Caco-2 (cell line): ENCODE measurements at regions of chr1 and their contacts with region 1.

Region 1: GRCh38 chr1:11907275-11908094 is 18.7 kb downstream of the KIAA2013 start:
- DNase-seq: peak; percentile 91 to 95
- H3K4me3 ChIP-seq: no peak overlapping the region
- H3K4me3 Mint-ChIP-seq: peak overlapping the region; percentile 99
- H3K27ac Mint-ChIP-seq: peak overlapping the region; percentile 99
- H3K4me1 ChIP-seq: 0 out of 2 replicates have a peak, but pooled peaks cover 7% of the 10 kb centered on the region
- H3K4me1 Mint-ChIP-seq: peaks cover 14% of the 10 kb centered on the region
- H3K27me3 ChIP-seq: no peaks in the 10 kb centered on the region
- H3K27me3 Mint-ChIP-seq: peaks cover 5% of the 10 kb centered on the region
- CTCF ChIP-seq: peak in 1 of 2 experiments; percentile 72

Region 2: GRCh38 chr1:11838349-11839272 is 68.9 kb before region 1 on chr1:
- CTCF ChIA-PET with region 1: interaction called, 11 read pairs
- POLR2A ChIA-PET with region 1: interaction called, 9 read pairs
- intact Hi-C with region 1: loop called (anchors 5 kb)
- DNase-seq: peak; percentile 68 to 81
- H3K4me3 ChIP-seq: no peak overlapping the region
- H3K4me3 Mint-ChIP-seq: no peak overlapping the region
- H3K27ac Mint-ChIP-seq: no peak overlapping the region
- H3K4me1 ChIP-seq: no peaks in the 10 kb centered on the region
- H3K4me1 Mint-ChIP-seq: no peaks in the 10 kb centered on the region
- H3K27me3 ChIP-seq: no peaks in the 10 kb centered on the region
- H3K27me3 Mint-ChIP-seq: no peaks in the 10 kb centered on the region
- CTCF ChIP-seq: peak; percentile 92 to 98

Region 3: DNA sequence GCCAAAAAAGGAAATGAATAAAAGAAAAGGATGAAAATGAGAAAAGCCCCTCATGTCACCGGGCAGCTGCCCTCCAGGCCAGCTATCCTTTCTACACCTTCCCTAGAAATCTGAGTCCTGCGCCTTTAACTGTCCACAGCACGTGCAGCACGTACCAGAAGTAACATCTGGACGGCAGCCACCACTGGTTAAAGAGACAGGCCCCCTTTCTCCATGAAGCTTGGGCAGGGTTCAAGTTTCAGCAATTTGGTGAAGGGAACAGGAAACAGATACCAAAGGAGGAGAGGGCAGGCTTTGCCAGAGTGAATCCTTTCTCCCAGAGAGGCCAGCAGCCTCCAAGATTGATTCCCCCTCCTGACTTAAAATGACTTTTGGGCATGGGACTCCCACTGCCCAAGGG is 22.4 kb after region 1 on chr1:
- CTCF ChIA-PET with region 1: no interaction called
- POLR2A ChIA-PET with region 1: interaction called, 15 read pairs
- intact Hi-C with region 1: loop called (anchors 2 kb)
- DNase-seq: no peak
- H3K4me3 ChIP-seq: no peak overlapping the region
- H3K4me3 Mint-ChIP-seq: no peak overlapping the region
- H3K27ac Mint-ChIP-seq: no peak overlapping the region
- H3K4me1 ChIP-seq: peaks cover 4% of the 10 kb centered on the region
- H3K4me1 Mint-ChIP-seq: peaks cover under 1% of the 10 kb centered on the region
- H3K27me3 ChIP-seq: no peaks in the 10 kb centered on the region
- H3K27me3 Mint-ChIP-seq: no peaks in the 10 kb centered on the region
- CTCF ChIP-seq: no peak

Region 4: GRCh38 chr1:11979851-11980675 is 72.6 kb after region 1 on chr1 and contains the start of gene MFN2:
- CTCF ChIA-PET with region 1: no interaction called
- POLR2A ChIA-PET with region 1: interaction called, 57 read pairs
- intact Hi-C with region 1: loop called (anchors 1 kb)
- DNase-seq: peak; percentile 97
- H3K4me3 ChIP-seq: peak within 1 kb of the TSS; percentile 71
- H3K4me3 Mint-ChIP-seq: peak within 1 kb of the TSS; percentile 99
- H3K27ac Mint-ChIP-seq: peak within 1 kb of the TSS; percentile 99
- H3K4me1 ChIP-seq: peaks cover 35% of the 10 kb centered on the region
- H3K4me1 Mint-ChIP-seq: peaks cover 19% of the 10 kb centered on the region
- H3K27me3 ChIP-seq: no peaks in the 10 kb centered on the region
- H3K27me3 Mint-ChIP-seq: no peaks in the 10 kb centered on the region
- CTCF ChIP-seq: no peak
- total RNA-seq, gene MFN2: 73.9 and 74.1 TPM in 2 replicates